ENCODE measurements at regions of chr6 and their contacts with region 1.

Region 1: GRCh38 chr6:16671302-16672289 is 89.7 kb downstream of the ATXN1 start:
- DNase-seq: no peak
- H3K4me3 ChIP-seq: no peak overlapping the region
- H3K27ac ChIP-seq: peak overlapping the region; percentile 20
- H3K4me1 ChIP-seq: peaks cover 23% of the 10 kb centered on the region
- H3K27me3 ChIP-seq: no peaks in the 10 kb centered on the region
- CTCF ChIP-seq: no peak

Region 2: GRCh38 chr6:15642276-15642675 is 1029.3 kb before region 1 on chr6:
- CTCF ChIA-PET with region 1: interaction called, 11 read pairs
- dilution Hi-C with region 1: no loop called
- in situ Hi-C with region 1: no loop called
- intact Hi-C with region 1: no loop called
- DNase-seq: no peak
- H3K4me3 ChIP-seq: no peak overlapping the region
- H3K27ac ChIP-seq: no peak overlapping the region
- H3K4me1 ChIP-seq: peaks cover 6% of the 10 kb centered on the region
- H3K27me3 ChIP-seq: no peaks in the 10 kb centered on the region
- CTCF ChIP-seq: peak; percentile 18 to 44

Region 3: DNA sequence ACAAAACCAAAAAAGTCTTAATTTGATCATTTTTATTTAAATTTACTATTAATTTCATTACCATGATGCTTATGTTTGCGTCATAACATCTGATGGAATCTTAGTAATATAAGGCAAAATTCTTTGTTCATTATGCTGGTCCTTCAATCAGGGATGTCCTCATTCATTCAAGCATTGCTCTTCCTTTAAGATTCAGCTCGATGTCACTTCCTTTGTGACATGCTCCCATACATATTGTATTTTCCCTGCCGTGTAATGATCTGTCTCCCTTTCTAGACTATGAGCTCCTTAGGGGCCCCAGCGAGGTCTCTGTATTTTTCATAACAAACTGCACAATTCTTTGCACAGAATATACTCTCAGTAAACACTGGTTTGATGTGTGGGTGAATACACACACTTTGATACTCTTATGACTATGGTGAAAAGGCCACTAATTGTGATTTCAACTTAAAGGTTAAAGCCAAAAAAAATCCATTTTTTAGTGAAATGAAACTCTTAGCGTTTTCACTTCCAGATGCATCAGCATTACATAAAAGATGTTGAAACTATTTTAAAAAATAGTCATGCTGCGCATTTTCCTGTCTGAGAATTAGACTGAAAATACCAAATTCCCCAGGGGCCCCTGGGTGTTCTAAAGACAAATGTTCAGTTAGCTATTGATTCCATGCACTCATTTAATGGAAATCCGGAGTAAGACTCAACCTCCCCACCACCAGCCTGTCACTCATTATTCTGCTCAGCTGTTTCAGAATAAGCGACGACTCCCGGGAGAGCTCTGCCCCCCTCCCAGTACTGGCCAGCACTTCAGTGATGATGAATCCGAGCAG is 80.0 kb before region 1 on chr6:
- CTCF ChIA-PET with region 1: no interaction called
- dilution Hi-C with region 1: no loop called
- in situ Hi-C with region 1: no loop called
- intact Hi-C with region 1: no loop called
- DNase-seq: no peak
- H3K4me3 ChIP-seq: no peak overlapping the region
- H3K27ac ChIP-seq: no peak overlapping the region
- H3K4me1 ChIP-seq: peaks cover 18% of the 10 kb centered on the region
- H3K27me3 ChIP-seq: no peaks in the 10 kb centered on the region
- CTCF ChIP-seq: no peak

Region 4: GRCh38 chr6:16684896-16685554 is 13.4 kb after region 1 on chr6:
- CTCF ChIA-PET with region 1: no interaction called
- dilution Hi-C with region 1: no loop called
- in situ Hi-C with region 1: no loop called
- intact Hi-C with region 1: no loop called
- DNase-seq: peak; percentile 97
- H3K4me3 ChIP-seq: no peak overlapping the region
- H3K27ac ChIP-seq: peak overlapping the region; percentile 91
- H3K4me1 ChIP-seq: peaks cover 63% of the 10 kb centered on the region
- H3K27me3 ChIP-seq: no peaks in the 10 kb centered on the region
- CTCF ChIP-seq: no peak

Region 5: GRCh38 chr6:16956361-16956760 is 284.8 kb after region 1 on chr6:
- CTCF ChIA-PET with region 1: no interaction called
- dilution Hi-C with region 1: no loop called
- in situ Hi-C with region 1: no loop called
- intact Hi-C with region 1: no loop called
- DNase-seq: no peak
- H3K4me3 ChIP-seq: no peak overlapping the region
- H3K27ac ChIP-seq: no peak overlapping the region
- H3K4me1 ChIP-seq: no peaks in the 10 kb centered on the region
- H3K27me3 ChIP-seq: no peaks in the 10 kb centered on the region
- CTCF ChIP-seq: peak in 1 of 2 donors; percentile 17

Measured in mammary epithelial cell (primary cell).